ENCODE measurements at regions of chr17 and their contacts with region 1.

Region 1: GRCh38 chr17:28425211-28425610 is 19.2 kb upstream of the SLC46A1 start:
- DNase-seq: no peak
- ATAC-seq: no peak
- H3K4me3 Mint-ChIP-seq: no peak overlapping the region
- H3K27ac Mint-ChIP-seq: no peak overlapping the region
- H3K4me1 Mint-ChIP-seq: no peaks in the 10 kb centered on the region
- H3K27me3 Mint-ChIP-seq: no peaks in the 10 kb centered on the region

Region 2: GRCh38 chr17:29357821-29358232 is 932.6 kb after region 1 on chr17:
- CTCF ChIA-PET with region 1: no interaction called
- POLR2A ChIA-PET with region 1: interaction called, 11 read pairs
- intact Hi-C with region 1: no loop called
- DNase-seq: no peak
- ATAC-seq: peak; percentile 84
- H3K4me3 Mint-ChIP-seq: no peak overlapping the region
- H3K27ac Mint-ChIP-seq: no peak overlapping the region
- H3K4me1 Mint-ChIP-seq: no peaks in the 10 kb centered on the region
- H3K27me3 Mint-ChIP-seq: no peaks in the 10 kb centered on the region